Activated CD4-positive, alpha-beta T cell treated with anti-CD3 and anti-CD28 coated beads for 36 hours (primary cell): ENCODE measurements at regions of chr1 and their contacts with region 1.

Region 1: DNA sequence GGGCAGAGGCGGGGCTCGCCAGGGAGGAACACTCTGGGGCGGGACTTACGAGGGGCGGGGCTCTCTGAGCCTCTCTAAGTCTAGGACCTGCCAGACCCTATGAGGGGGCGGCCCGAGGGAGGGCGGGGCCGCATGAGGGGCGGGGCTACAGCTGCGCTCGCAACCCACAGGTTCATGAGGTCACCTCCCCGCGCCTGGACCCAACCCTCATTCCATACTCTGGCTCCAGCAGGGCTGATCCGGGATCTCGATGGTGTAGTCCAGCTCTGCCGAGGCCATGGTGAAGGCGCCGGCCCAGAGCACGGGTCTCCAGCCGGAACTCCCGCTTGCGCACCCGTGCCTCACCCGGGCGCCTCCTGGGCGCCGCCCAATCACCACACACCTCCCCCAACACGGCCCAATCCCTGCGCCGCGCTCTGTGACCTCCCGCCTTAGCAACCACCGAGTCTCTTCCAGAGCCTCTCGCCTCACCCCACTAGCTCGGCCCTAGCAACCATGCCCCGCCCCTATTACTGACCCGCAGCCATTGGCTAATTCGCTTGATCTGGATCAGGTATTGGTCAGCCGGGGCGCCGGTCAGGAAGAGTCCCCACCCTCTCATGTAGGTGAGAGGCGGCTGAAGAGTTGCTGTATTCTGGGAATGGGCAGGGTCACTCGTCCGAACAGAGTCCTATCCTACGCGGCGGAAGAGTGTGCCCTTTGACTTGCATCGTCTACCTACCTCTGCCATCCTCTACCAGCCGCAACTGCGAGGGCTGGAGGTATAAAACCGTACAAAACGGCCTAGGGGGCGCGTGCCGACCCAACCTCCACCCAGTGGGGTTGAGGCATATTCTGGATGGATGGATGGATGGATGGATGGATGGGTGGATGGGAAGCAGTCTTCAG is at the starts of genes ARMH1 and TMEM53:
- DNase-seq: peak; percentile 99
- ATAC-seq: peak; percentile 97
- H3K4me3 Mint-ChIP-seq: peak within 1 kb of the TSS; percentile 78
- H3K27ac Mint-ChIP-seq: peak within 1 kb of the TSS; percentile 84
- H3K4me1 Mint-ChIP-seq: peaks cover 24% of the 10 kb centered on the region
- H3K27me3 Mint-ChIP-seq: no peaks in the 10 kb centered on the region
- total RNA-seq, gene ARMH1: 67.3 to 75.1 TPM
- total RNA-seq, gene TMEM53: 4.3 to 5.5 TPM

Region 2: DNA sequence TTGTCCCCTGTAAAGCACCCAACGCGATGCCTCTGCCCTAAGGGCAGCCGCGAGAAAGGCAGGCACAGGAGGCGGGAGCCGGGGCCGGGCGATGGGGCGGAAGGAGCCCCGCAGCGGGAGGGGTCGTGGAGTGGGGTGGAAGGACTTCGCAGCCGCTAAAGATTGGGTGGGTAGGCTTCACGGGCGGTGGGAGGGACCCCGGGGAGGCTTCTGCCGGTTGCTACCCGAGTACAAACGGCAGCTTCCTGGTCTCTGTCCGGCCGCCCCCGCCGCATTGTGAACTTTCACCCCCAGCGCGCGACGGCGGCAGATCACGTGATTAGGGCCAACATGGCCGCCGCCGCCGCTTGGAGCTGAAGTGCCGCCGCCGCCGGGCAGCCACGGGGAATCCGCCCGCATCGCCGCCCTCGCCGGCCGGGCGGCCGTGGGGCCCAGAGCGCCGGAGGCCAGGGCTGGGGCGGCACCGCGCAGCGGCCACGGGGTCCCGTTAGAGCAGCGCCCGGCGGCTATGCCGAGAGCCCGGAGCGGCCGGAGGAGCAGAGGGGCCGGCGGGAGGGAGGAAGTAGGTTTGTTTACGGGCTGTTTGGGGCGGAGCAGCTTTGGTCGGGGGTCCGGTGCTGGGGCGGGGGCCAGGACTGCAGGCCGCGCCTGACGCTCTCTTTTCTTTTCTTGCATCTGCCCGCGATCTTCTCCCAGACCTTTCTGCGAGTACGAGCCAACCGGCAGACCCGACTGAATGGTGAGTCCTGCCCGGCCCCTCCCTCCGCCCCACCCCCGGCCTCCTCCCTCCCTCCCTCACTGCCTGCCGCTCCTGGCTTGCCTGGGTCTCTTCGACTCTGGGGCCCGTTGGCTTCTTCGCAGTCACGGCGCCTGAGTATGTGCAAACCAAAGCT is 42.5 kb before region 1 on chr1:
- CTCF ChIA-PET with region 1: interaction called, 3 read pairs
- POLR2A ChIA-PET with region 1: interaction called, 9 read pairs
- intact Hi-C with region 1: loop called (anchors 1 kb)
- DNase-seq: peak; percentile 95
- ATAC-seq: peak; percentile 81
- H3K4me3 Mint-ChIP-seq: peak overlapping the region; percentile 86
- H3K27ac Mint-ChIP-seq: peak overlapping the region; percentile 97
- H3K4me1 Mint-ChIP-seq: peaks cover 40% of the 10 kb centered on the region
- H3K27me3 Mint-ChIP-seq: no peaks in the 10 kb centered on the region

Region 3: DNA sequence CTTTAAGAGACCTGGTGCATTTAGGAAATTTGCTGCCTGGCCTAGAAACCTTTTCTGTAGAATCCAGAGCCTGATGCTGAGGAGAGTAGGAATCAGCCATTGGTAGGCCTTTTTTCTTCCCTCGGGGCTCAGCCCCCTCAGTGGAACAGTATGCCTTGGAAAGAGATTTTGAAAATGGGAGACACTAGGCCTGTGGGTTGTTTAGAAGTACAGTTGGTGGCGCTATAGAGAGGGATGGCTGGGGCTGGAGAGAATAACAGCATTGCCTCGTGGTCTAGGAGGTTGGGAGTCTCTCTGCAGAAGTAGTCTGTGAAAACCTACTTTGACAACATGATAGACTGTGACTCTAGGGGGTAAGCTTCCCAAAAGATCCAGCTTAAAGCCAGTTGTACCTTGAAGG is 73.5 kb after region 1 on chr1:
- CTCF ChIA-PET with region 1: no interaction called
- POLR2A ChIA-PET with region 1: no interaction called
- intact Hi-C with region 1: no loop called
- DNase-seq: no peak
- ATAC-seq: no peak
- H3K4me3 Mint-ChIP-seq: no peak overlapping the region
- H3K27ac Mint-ChIP-seq: no peak overlapping the region
- H3K4me1 Mint-ChIP-seq: peaks cover 7% of the 10 kb centered on the region
- H3K27me3 Mint-ChIP-seq: no peaks in the 10 kb centered on the region

Region 4: DNA sequence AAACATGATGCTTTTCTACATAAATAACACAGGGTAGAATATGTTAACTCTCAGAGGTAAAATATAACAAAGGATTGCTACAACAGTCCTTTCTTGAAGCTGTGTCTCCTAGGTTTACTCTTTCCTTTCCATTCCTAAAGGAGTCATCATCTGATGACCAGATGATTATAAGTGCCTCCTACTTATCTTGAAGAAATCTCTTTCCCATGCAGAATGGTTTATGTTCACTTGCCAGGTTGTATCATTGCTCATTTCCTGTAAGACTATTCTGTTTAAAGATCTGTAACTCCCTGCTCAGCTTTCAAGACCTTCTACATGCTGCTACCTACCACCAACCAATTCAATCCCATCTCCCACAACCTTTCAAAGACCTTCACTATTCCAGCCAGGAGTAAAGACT is 220.2 kb after region 1 on chr1:
- CTCF ChIA-PET with region 1: no interaction called
- POLR2A ChIA-PET with region 1: no interaction called
- intact Hi-C with region 1: no loop called
- DNase-seq: no peak
- ATAC-seq: no peak
- H3K4me3 Mint-ChIP-seq: no peak overlapping the region
- H3K27ac Mint-ChIP-seq: no peak overlapping the region
- H3K4me1 Mint-ChIP-seq: no peaks in the 10 kb centered on the region
- H3K27me3 Mint-ChIP-seq: no peaks in the 10 kb centered on the region